ENCODE measurements at regions of chr12 and their contacts with region 1.

Region 1: GRCh38 chr12:55745361-55746146 is 2.6 kb downstream of the GDF11 start:
- DNase-seq: no peak
- ATAC-seq: peak; percentile 11
- H3K4me3 ChIP-seq: peak overlapping the region; percentile 79
- H3K27ac ChIP-seq: no peak overlapping the region
- H3K4me1 ChIP-seq: peaks cover 5% of the 10 kb centered on the region
- H3K27me3 ChIP-seq: no peaks in the 10 kb centered on the region
- CTCF ChIP-seq: no peak
- EP300 ChIP-seq: no peak
- POLR2A ChIP-seq: no peak
- RAD21 ChIP-seq: no peak

Region 2: DNA sequence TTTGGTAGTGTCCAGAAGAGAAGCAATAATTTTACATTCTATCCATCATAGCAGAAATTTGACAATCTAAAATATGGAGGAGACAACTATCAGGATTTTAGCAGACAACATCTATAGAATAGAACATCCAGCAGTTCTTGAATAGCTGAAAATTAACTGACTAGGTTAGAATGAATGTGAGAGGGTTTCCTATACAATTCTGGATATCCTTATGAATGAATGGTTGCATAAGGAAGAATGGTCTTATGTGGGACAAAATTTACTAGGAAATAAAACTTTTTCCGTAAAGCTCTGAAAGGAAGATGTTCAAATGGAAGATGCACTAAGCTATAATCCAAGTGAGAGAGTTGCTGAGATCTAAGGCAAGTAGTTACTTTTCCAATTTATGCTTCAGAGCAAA is 415.1 kb before region 1 on chr12 and contains the start of gene OR6C3:
- CTCF ChIA-PET with region 1: no interaction called
- POLR2A ChIA-PET with region 1: no interaction called
- RAD21 ChIA-PET with region 1: no interaction called
- SMC1A ChIA-PET with region 1: no interaction called
- in situ Hi-C with region 1: no loop called
- intact Hi-C with region 1: no loop called
- DNase-seq: no peak
- ATAC-seq: no peak
- H3K4me3 ChIP-seq: no peak within 1 kb of the TSS
- H3K27ac ChIP-seq: no peak within 1 kb of the TSS
- H3K4me1 ChIP-seq: no peaks in the 10 kb centered on the region
- H3K27me3 ChIP-seq: no peaks in the 10 kb centered on the region
- CTCF ChIP-seq: no peak
- EP300 ChIP-seq: no peak
- POLR2A ChIP-seq: no peak
- RAD21 ChIP-seq: no peak
- polyA plus RNA-seq, gene OR6C3: not detected

Region 3: GRCh38 chr12:55515696-55516095 is 229.9 kb before region 1 on chr12:
- CTCF ChIA-PET with region 1: no interaction called
- POLR2A ChIA-PET with region 1: no interaction called
- RAD21 ChIA-PET with region 1: no interaction called
- SMC1A ChIA-PET with region 1: no interaction called
- in situ Hi-C with region 1: no loop called
- intact Hi-C with region 1: no loop called
- DNase-seq: no peak
- ATAC-seq: peak; percentile 55; the same call in 1 of the 3 replicates
- H3K4me3 ChIP-seq: no peak overlapping the region
- H3K27ac ChIP-seq: no peak overlapping the region
- H3K4me1 ChIP-seq: no peaks in the 10 kb centered on the region
- H3K27me3 ChIP-seq: no peaks in the 10 kb centered on the region
- CTCF ChIP-seq: peak in 1 of 3 experiments; percentile 32; a peak in 1 of 6 replicates
- EP300 ChIP-seq: no peak
- POLR2A ChIP-seq: no peak
- RAD21 ChIP-seq: no peak

Region 4: GRCh38 chr12:55757701-55758100 is 12.1 kb after region 1 on chr12:
- CTCF ChIA-PET with region 1: interaction called, 9 read pairs
- POLR2A ChIA-PET with region 1: interaction called, 9 read pairs
- RAD21 ChIA-PET with region 1: interaction called, 3 read pairs
- SMC1A ChIA-PET with region 1: interaction called, 21 read pairs
- in situ Hi-C with region 1: no loop called
- intact Hi-C with region 1: no loop called
- DNase-seq: no peak
- ATAC-seq: no peak
- H3K4me3 ChIP-seq: no peak overlapping the region
- H3K27ac ChIP-seq: no peak overlapping the region
- H3K4me1 ChIP-seq: no peaks in the 10 kb centered on the region
- H3K27me3 ChIP-seq: no peaks in the 10 kb centered on the region
- CTCF ChIP-seq: no peak
- EP300 ChIP-seq: no peak
- POLR2A ChIP-seq: no peak
- RAD21 ChIP-seq: no peak

Region 5: DNA sequence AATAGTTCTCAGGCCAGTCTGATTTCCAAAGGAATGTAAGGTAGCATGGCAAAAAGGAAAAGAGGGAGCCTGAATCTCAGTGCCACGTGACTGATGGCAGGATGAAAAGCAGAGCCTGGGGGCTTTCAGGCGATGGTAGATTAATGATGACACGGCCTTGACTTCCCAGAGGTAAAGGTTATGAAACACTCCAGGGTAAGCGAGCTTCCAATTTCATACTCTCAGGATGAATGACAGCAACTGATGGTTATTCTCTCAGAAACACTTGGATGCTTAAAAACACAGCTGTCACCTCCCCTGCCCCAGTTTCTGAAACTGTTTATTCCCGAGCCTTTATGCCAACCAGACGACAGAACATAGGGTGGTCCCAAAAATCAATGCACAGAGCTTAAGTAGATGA is 26.2 kb after region 1 on chr12:
- CTCF ChIA-PET with region 1: no interaction called
- POLR2A ChIA-PET with region 1: interaction called, 3 read pairs
- RAD21 ChIA-PET with region 1: no interaction called
- SMC1A ChIA-PET with region 1: interaction called, 11 read pairs
- in situ Hi-C with region 1: no loop called
- intact Hi-C with region 1: no loop called
- DNase-seq: no peak
- ATAC-seq: no peak
- H3K4me3 ChIP-seq: no peak overlapping the region
- H3K27ac ChIP-seq: no peak overlapping the region
- H3K4me1 ChIP-seq: no peaks in the 10 kb centered on the region
- H3K27me3 ChIP-seq: no peaks in the 10 kb centered on the region
- CTCF ChIP-seq: no peak
- EP300 ChIP-seq: no peak
- POLR2A ChIP-seq: no peak
- RAD21 ChIP-seq: no peak